B cell (primary cell): ENCODE measurements at regions of chr13 and their contacts with region 1.

Region 1: GRCh38 chr13:45807520-45808099 is 43.9 kb downstream of the SIAH3 start:
- DNase-seq: peak; percentile 29
- ATAC-seq: no peak
- H3K4me3 ChIP-seq: no peak overlapping the region
- H3K4me3 Mint-ChIP-seq: no peak overlapping the region
- H3K27ac ChIP-seq: no peak overlapping the region
- H3K27ac Mint-ChIP-seq: no peak overlapping the region
- H3K4me1 ChIP-seq: no peaks in the 10 kb centered on the region
- H3K4me1 Mint-ChIP-seq: no peaks in the 10 kb centered on the region
- H3K27me3 ChIP-seq: no peaks in the 10 kb centered on the region
- H3K27me3 Mint-ChIP-seq: peaks cover 3% of the 10 kb centered on the region
- CTCF ChIP-seq: no peak

Region 2: DNA sequence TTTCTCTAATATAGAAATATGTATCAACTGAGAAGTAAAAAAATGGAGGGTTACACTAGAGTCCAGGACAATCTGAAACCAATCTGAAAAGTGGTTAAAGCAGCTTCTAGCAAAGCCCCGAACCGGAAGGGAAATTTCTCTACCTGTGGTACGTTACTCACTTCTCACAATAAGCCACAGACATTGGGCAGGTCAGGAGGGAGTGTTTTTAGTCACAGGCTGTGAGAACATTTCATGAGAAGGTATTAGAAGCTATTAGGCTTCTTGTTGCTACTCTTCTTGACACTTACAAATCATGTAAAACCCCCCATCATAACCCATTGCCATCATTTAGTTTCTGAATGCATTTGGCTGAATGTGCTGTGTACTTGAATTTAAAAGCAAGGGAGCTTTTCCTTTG is 939.2 kb before region 1 on chr13:
- CTCF ChIA-PET with region 1: no interaction called
- POLR2A ChIA-PET with region 1: no interaction called
- intact Hi-C with region 1: no loop called
- DNase-seq: no peak
- ATAC-seq: no peak
- H3K4me3 ChIP-seq: no peak overlapping the region
- H3K4me3 Mint-ChIP-seq: no peak overlapping the region
- H3K27ac ChIP-seq: no peak overlapping the region
- H3K27ac Mint-ChIP-seq: no peak overlapping the region
- H3K4me1 ChIP-seq: no peaks in the 10 kb centered on the region
- H3K4me1 Mint-ChIP-seq: no peaks in the 10 kb centered on the region
- H3K27me3 ChIP-seq: no peaks in the 10 kb centered on the region
- H3K27me3 Mint-ChIP-seq: peaks cover 3% of the 10 kb centered on the region
- CTCF ChIP-seq: no peak

Region 3: GRCh38 chr13:45773236-45773635 is 34.4 kb before region 1 on chr13:
- CTCF ChIA-PET with region 1: no interaction called
- POLR2A ChIA-PET with region 1: no interaction called
- intact Hi-C with region 1: no loop called
- DNase-seq: no peak
- ATAC-seq: no peak
- H3K4me3 ChIP-seq: no peak overlapping the region
- H3K4me3 Mint-ChIP-seq: no peak overlapping the region
- H3K27ac ChIP-seq: no peak overlapping the region
- H3K27ac Mint-ChIP-seq: no peak overlapping the region
- H3K4me1 ChIP-seq: no peaks in the 10 kb centered on the region
- H3K4me1 Mint-ChIP-seq: no peaks in the 10 kb centered on the region
- H3K27me3 ChIP-seq: no peaks in the 10 kb centered on the region
- H3K27me3 Mint-ChIP-seq: peaks cover 4% of the 10 kb centered on the region
- CTCF ChIP-seq: no peak

Region 4: GRCh38 chr13:46031581-46032263 is 224.1 kb after region 1 on chr13:
- CTCF ChIA-PET with region 1: no interaction called
- POLR2A ChIA-PET with region 1: no interaction called
- intact Hi-C with region 1: no loop called
- DNase-seq: no peak
- ATAC-seq: no peak
- H3K4me3 ChIP-seq: no peak overlapping the region
- H3K4me3 Mint-ChIP-seq: no peak overlapping the region
- H3K27ac ChIP-seq: no peak overlapping the region
- H3K27ac Mint-ChIP-seq: no peak overlapping the region
- H3K4me1 ChIP-seq: no peaks in the 10 kb centered on the region
- H3K4me1 Mint-ChIP-seq: peaks cover 7% of the 10 kb centered on the region
- H3K27me3 ChIP-seq: no peaks in the 10 kb centered on the region
- H3K27me3 Mint-ChIP-seq: no peaks in the 10 kb centered on the region
- CTCF ChIP-seq: no peak

Region 5: GRCh38 chr13:46126552-46127357 is 319.1 kb after region 1 on chr13:
- CTCF ChIA-PET with region 1: interaction called, 3 read pairs
- POLR2A ChIA-PET with region 1: no interaction called
- intact Hi-C with region 1: loop called (anchors 10 kb)
- DNase-seq: peak; percentile 74
- ATAC-seq: peak; percentile 92
- H3K4me3 ChIP-seq: no peak overlapping the region
- H3K4me3 Mint-ChIP-seq: no peak overlapping the region
- H3K27ac ChIP-seq: peak overlapping the region in 1 of 2 donors; percentile 78
- H3K27ac Mint-ChIP-seq: peak overlapping the region; percentile 88
- H3K4me1 ChIP-seq: peaks cover 13 to 16% of the 10 kb centered on the region in 2 donors
- H3K4me1 Mint-ChIP-seq: peaks cover 30% of the 10 kb centered on the region
- H3K27me3 ChIP-seq: no peaks in the 10 kb centered on the region
- H3K27me3 Mint-ChIP-seq: no peaks in the 10 kb centered on the region
- CTCF ChIP-seq: peak; percentile 80

Region 6: GRCh38 chr13:46288570-46289259 is 481.1 kb after region 1 on chr13:
- CTCF ChIA-PET with region 1: interaction called, 18 read pairs
- POLR2A ChIA-PET with region 1: no interaction called
- intact Hi-C with region 1: no loop called
- DNase-seq: peak; percentile 65
- ATAC-seq: peak; percentile 24
- H3K4me3 ChIP-seq: no peak overlapping the region
- H3K4me3 Mint-ChIP-seq: no peak overlapping the region
- H3K27ac ChIP-seq: no peak overlapping the region
- H3K27ac Mint-ChIP-seq: no peak overlapping the region
- H3K4me1 ChIP-seq: no peaks in the 10 kb centered on the region
- H3K4me1 Mint-ChIP-seq: no peaks in the 10 kb centered on the region
- H3K27me3 ChIP-seq: no peaks in the 10 kb centered on the region
- H3K27me3 Mint-ChIP-seq: no peaks in the 10 kb centered on the region
- CTCF ChIP-seq: peak; percentile 87

Region 7: DNA sequence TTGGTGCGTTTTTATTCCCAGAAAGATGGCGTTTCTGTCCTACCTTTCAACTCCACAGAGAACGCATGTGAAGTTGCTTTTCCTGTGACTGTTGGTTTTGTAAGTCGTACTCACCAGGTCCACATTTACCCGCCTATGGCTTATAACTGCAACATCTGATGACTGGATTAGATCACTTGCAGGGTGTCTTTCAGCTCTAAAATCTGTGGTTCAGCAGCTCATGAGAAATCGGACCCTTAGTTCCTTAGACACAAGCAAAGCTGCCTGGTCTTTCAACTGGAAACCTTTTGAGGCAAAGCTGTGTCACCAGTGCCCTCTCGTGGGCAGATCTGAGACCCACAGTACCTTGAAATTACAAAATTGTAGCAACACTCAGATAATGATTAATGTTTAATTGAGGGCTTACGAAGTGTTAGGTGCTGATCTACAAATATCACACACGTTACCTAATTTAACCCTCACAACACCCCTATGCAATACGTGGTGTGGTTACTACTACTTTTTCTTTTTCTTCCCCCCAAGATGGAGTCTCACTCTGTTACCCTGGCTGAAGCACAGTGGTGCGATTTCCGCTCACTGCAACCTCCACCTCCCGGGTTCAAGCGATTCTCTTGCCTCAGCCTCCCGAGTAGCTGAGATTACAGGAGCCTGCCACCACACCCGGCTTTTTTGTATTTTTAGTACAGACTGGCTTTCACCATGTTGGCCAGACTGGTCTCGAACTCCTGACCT is 514.0 kb after region 1 on chr13:
- CTCF ChIA-PET with region 1: interaction called, 15 read pairs
- POLR2A ChIA-PET with region 1: no interaction called
- intact Hi-C with region 1: no loop called
- DNase-seq: peak; percentile 73
- ATAC-seq: peak; percentile 79
- H3K4me3 ChIP-seq: peak overlapping the region in 2 of 5 experiments; percentile 5 to 13
- H3K4me3 Mint-ChIP-seq: no peak overlapping the region
- H3K27ac ChIP-seq: no peak overlapping the region
- H3K27ac Mint-ChIP-seq: no peak overlapping the region
- H3K4me1 ChIP-seq: peaks cover 0 to 9% of the 10 kb centered on the region in 2 donors
- H3K4me1 Mint-ChIP-seq: peaks cover 13% of the 10 kb centered on the region
- H3K27me3 ChIP-seq: no peaks in the 10 kb centered on the region
- H3K27me3 Mint-ChIP-seq: no peaks in the 10 kb centered on the region
- CTCF ChIP-seq: peak; percentile 87

Region 8: GRCh38 chr13:46495651-46496050 is 688.0 kb after region 1 on chr13:
- CTCF ChIA-PET with region 1: no interaction called
- POLR2A ChIA-PET with region 1: no interaction called
- intact Hi-C with region 1: no loop called
- DNase-seq: no peak
- ATAC-seq: no peak
- H3K4me3 ChIP-seq: no peak overlapping the region
- H3K4me3 Mint-ChIP-seq: no peak overlapping the region
- H3K27ac ChIP-seq: no peak overlapping the region
- H3K27ac Mint-ChIP-seq: no peak overlapping the region
- H3K4me1 ChIP-seq: no peaks in the 10 kb centered on the region
- H3K4me1 Mint-ChIP-seq: no peaks in the 10 kb centered on the region
- H3K27me3 ChIP-seq: no peaks in the 10 kb centered on the region
- H3K27me3 Mint-ChIP-seq: peaks cover 6% of the 10 kb centered on the region
- CTCF ChIP-seq: no peak